Breast epithelium (tissue), 4 donors: ENCODE measurements at regions of chr12 and their contacts with region 1.

Region 1: GRCh38 chr12:52147367-52147972 is 44.3 kb downstream of the KRT80 start:
- DNase-seq: peak; percentile 98
- H3K4me3 ChIP-seq: no peak overlapping the region
- H3K27ac ChIP-seq: peak overlapping the region; percentile 100
- H3K4me1 ChIP-seq: peaks cover 15 to 67% of the 10 kb centered on the region in 2 donors
- H3K27me3 ChIP-seq: no peaks in the 10 kb centered on the region
- CTCF ChIP-seq: peak in 1 of 3 donors; percentile 5
- POLR2A ChIP-seq: peak; percentile 58

Region 2: DNA sequence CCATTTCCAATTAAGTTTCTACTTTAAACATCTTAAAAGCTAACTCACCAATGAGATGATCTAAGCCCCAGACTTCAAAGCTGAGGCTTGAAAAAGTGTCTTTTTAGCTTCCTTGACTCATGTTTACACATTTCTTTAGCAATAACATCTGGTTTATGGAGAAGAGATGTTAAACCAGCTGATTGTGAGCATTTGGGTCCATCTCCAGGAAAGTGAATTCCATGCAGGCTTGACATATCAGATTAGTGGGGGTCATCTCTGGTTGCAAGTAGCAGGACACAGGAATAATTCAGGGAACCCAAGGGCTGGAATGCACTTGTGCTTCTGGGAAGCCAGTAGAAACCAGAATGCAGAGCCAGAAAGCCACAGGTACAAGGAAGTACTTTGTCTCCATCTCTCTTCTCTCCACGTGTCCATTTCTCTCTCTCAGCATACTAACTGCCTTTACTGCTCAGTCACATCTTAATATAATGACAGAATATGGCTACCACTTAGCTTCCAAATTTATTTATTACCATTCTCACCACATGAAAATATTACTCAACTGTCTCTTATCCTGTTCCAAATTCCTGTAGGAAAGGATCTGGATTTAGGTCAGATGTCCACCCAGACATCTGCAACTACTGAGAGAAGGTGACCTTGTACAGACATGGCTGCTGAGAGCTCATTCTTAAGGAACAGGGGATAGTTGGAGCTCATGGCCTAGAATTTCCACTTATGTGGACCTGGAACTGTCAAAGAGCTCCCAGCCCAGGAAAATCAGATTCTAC is 452.0 kb before region 1 on chr12:
- intact Hi-C with region 1: no loop called
- DNase-seq: no peak
- H3K4me3 ChIP-seq: no peak overlapping the region
- H3K27ac ChIP-seq: no peak overlapping the region
- H3K4me1 ChIP-seq: peaks cover 0 to 4% of the 10 kb centered on the region in 2 donors
- H3K27me3 ChIP-seq: no peaks in the 10 kb centered on the region
- CTCF ChIP-seq: no peak
- POLR2A ChIP-seq: no peak

Region 3: GRCh38 chr12:52175371-52176350 is 28.2 kb after region 1 on chr12:
- intact Hi-C with region 1: no loop called
- DNase-seq: peak in 1 of 2 donors; percentile 80
- H3K4me3 ChIP-seq: no peak overlapping the region
- H3K27ac ChIP-seq: peak overlapping the region; percentile 71 to 76
- H3K4me1 ChIP-seq: no peaks in the 10 kb centered on the region
- H3K27me3 ChIP-seq: no peaks in the 10 kb centered on the region
- CTCF ChIP-seq: peak in 2 of 3 donors; percentile 37 to 63
- POLR2A ChIP-seq: no peak

Region 4: GRCh38 chr12:52306023-52306705 is 158.7 kb after region 1 on chr12:
- intact Hi-C with region 1: no loop called
- DNase-seq: peak in 1 of 2 donors; percentile 17
- H3K4me3 ChIP-seq: no peak overlapping the region
- H3K27ac ChIP-seq: no peak overlapping the region
- H3K4me1 ChIP-seq: no peaks in the 10 kb centered on the region
- H3K27me3 ChIP-seq: no peaks in the 10 kb centered on the region
- CTCF ChIP-seq: peak in 1 of 3 donors; percentile 11
- POLR2A ChIP-seq: no peak

Region 5: DNA sequence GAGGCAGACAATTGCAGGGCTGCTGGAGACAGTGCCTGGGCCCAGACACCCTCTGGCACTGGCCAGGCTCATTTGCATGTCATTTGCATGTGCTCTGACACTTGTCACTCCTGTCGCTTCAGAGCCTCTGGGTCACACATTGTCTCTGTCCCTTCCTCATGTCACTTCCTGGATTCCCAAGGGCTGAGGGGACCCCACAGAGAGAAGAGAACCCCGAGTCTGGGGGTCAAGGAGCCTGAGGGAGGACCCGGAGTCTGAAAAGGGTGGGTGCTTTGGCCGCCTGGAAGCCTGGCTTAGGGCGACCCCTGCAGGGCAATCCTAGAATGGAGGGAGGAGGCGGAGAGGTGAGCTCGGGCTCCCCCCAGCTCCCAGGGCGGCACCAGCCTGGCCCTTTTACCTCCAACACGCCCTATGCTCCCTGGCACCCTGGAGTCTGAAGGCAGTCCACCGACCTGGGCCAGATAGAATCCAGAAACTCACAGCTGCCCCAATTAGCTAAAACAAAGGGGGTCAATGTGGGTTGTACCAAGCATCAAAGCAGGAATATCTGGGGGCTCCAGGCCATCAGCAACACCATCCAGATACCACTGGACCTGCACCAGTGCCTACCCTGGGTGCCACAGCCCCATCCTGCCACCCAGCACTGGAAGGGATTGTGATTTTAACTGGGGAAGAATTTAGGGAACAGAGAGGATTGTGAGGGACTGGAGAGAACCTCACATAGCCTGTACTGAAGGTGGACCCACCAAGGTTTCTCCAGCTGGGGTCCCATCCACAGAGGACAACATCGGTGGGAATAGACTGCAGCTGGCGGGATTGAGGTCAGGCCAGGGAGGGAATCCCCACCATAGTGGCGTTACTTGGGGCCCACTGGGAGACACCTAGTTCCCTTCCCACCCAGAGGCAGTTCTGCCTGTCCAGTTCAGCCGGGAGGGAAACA is 723.2 kb after region 1 on chr12:
- intact Hi-C with region 1: loop called (anchors 5 kb)
- DNase-seq: no peak
- H3K4me3 ChIP-seq: no peak overlapping the region
- H3K27ac ChIP-seq: peak overlapping the region; percentile 95 to 98
- H3K4me1 ChIP-seq: peaks cover 4 to 19% of the 10 kb centered on the region in 2 donors
- H3K27me3 ChIP-seq: no peaks in the 10 kb centered on the region
- CTCF ChIP-seq: peak; percentile 27 to 44 (median 38)
- POLR2A ChIP-seq: no peak